Right ventricle myocardium superior (tissue), 1 donor: ENCODE measurements at regions of chr17 and their contacts with region 1.

Region 1: DNA sequence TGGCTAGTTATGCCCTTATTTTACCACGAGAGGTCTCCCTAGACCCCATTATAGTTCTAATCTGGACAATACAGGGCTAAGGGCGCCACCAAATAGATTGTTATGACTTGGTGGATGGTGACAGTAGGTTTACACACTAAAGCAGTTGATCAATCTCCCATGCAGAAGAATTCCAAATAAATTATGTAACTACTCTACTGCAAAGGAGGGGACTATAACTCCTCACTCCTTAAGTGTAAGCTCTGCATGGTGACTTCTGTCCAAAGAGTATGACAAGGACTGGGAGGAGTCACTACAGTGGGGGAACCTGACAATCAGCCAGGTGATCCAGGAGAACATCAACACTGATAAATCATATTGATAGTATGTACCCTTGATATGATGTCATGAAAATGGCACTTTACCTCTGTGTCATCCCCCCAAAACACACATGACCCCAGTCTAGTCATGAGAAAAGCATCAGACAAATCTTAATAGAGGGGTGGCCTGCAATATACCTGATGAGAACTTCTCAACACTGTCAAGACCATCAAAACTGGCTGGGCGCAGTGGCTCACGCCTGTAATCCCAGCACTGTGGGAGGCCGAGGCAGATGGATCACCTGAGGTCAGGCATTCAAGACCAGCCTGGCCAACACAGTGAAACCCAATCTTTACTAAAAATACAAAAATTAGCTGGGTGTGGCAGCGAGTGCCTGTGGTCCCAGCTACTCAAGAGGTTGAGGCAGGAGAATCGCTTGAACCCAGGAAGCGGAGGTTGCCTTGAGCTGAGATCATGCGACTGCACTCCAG is 20.1 kb upstream of the YPEL2 start:
- DNase-seq: no peak
- ATAC-seq: peak; percentile 97

Region 2: GRCh38 chr17:59331129-59331928 is 20.0 kb after region 1 on chr17 and contains the start of gene YPEL2:
- intact Hi-C with region 1: no loop called
- DNase-seq: peak; percentile 98
- ATAC-seq: peak; percentile 89
- total RNA-seq, gene YPEL2: 28.9 TPM

Region 3: DNA sequence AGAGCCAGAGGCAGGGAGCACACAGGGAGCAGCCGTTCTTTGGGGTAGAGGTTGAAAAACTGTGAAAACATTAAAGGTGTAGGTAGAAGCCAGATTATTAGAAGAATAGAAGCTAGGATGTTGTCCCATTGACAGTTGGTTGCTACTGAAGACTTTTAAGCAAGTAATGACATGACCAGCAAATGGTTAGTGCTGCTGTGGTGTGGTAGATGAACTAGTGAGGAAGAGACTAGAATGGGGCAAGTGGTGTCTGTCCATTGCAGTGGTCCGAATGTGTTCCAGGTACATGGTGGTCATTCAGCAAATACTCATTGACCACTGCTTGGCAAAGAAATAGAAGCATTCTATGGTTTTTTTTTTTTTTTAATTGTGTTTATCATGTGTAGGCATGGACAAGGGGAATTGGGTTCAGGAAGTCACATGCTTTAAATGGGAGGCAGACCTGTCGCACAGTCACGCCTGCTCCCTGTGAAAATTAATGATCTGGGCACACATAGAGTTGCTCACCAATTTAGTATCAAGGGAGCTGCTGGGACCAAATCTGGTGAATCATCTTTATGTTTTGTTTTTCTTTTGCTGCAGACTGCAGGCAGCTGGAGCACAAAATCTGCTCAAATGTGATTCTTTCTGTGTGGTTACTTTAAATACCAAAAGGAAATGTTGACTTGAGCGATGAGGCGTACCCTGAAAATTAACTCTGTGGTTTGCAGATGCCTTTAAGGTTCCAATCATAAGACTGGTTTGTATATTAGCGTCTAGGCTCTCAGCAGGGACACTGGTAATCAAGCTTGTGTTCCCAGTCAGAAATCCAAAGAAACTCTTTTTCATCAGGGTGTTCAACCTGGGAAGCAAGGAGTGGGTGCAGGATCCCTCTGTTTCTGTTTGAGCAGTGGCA is 50.8 kb after region 1 on chr17:
- intact Hi-C with region 1: no loop called
- DNase-seq: no peak
- ATAC-seq: no peak

Region 4: DNA sequence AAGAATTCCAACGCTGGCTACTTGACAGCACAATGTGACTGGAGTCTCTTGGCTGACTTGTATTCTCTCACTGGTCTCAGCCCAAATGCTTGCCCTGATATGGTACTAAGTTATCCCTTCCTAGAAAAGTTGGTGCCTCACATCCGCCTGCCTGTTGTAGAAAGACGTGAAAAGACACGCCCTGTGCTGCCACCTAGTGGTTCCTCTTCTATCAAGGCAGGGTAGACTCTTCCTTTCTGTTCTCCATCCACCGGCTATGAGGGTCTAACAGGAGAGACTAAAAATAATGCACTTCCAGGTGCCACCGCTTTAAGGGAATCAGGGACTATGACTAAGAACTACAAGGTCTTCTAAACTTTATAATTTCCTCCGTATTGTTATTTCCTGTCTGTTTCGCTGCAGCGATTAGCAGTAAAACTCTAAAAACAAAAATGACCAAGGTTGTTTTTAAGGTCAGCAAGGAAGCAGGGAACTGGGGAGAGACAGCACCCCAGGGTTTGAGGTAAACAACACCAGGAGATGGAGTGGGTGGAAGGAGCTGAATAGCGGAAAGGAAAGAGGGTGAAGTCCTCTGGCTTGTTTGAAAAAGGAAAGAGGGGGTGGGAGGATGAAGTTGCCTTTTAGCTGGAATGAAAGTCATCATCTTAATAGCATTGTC is 129.6 kb after region 1 on chr17:
- intact Hi-C with region 1: loop called (anchors 2 kb)
- DNase-seq: peak; percentile 89
- ATAC-seq: peak; percentile 93

Region 5: DNA sequence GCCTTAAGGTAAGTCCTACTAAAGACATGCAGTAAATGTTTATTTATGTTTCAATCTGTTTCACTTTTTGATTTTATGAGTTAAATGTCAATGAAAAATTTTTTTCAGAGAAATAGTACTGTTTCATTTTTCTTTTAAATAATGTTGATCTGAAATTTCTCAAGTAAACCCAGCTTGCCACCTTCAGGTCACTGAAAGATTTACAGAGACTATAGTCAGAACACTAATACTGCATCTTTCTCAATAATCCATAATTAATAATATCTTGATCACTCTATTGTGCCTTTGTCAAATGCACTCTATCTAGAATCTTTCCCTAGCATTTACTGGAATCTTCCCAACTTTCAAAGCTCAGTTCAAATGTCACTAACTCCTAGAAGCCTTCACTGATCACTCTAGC is 247.7 kb after region 1 on chr17:
- intact Hi-C with region 1: loop called (anchors 10 kb)
- DNase-seq: no peak
- ATAC-seq: no peak

Region 6: DNA sequence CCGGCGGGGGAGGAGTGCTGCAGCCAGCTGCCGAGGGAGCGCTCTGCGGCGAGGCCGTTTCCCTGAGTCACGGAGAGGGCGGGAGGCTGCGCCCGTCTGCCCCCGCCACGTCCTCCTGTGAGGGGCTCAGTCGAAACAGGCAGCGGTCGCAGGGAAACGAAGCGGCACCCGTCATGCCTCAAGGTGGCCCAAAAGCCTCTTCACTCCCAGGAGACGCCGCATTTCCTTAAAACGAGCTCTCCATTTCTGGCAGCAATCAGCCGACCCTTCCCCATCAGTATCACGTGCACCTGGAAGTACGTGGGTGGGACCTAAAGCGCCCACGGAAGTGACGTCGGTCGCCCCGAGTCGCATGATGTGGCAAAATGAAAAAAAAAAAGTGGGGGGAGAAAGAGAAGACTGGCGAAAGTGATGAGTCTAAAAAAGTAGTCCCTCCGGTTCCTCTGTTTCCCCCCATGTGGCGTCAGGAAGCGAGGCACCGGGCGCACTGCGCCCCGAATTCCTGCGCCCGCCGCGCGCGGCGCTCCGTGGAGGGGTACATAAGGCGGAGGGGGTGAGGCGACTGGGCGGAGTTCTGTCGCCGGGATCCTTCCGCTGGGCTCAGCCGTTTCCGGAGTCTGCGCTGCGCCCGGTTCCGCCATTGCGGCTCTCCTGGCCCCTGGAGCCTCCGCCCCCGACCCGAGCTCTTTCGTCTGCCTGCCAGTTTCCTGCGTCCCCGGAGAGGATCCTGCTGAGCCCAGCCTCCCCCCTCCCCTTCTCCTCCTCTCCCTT is 308.2 kb after region 1 on chr17 and contains the start of gene CLTC:
- intact Hi-C with region 1: no loop called
- DNase-seq: peak; percentile 95
- ATAC-seq: peak; percentile 94
- total RNA-seq, gene CLTC: 126 TPM